Activated B cell treated with CpG ODN at 0.5 μM for 24 hours (primary cell): ENCODE measurements at regions of chr16 and their contacts with region 1.

Region 1: DNA sequence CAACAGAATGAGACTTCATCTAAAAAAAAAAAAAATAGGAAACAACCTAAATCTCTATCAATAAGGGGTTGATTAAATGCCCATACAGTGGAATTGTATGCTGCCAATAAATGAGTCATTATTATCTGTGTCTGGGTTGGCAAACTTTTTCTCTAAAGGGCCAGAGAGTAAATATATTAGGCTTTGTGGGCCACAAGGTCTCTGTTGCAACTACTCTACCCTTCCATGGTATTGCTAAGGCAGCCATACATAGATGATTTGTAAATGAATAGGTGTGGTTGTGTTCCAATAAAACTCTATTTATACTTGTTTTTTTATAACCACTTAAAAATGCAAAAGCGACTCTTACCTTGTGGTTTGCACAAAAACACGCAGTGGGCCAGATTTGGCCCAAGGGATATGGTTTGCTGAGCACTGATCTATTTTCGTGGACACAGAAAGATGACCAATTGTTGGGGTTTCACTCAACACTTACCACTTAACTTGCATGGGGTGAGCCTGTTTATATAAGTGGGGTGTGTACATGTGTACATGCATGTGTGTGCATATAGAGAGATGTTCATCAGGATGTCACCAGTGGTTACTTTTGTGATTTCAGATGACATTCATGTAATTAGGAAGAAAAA is 12.4 kb upstream of the IL4R start:
- DNase-seq: no peak
- ATAC-seq: no peak
- H3K4me3 Mint-ChIP-seq: no peak overlapping the region
- H3K27ac Mint-ChIP-seq: peak overlapping the region; percentile 42
- H3K4me1 Mint-ChIP-seq: peaks cover 88% of the 10 kb centered on the region
- H3K27me3 Mint-ChIP-seq: no peaks in the 10 kb centered on the region
- CTCF ChIP-seq: no peak

Region 2: GRCh38 chr16:26963114-26963513 is 338.2 kb before region 1 on chr16:
- CTCF ChIA-PET with region 1: no interaction called
- POLR2A ChIA-PET with region 1: no interaction called
- intact Hi-C with region 1: no loop called
- DNase-seq: no peak
- ATAC-seq: no peak
- H3K4me3 Mint-ChIP-seq: no peak overlapping the region
- H3K27ac Mint-ChIP-seq: no peak overlapping the region
- H3K4me1 Mint-ChIP-seq: no peaks in the 10 kb centered on the region
- H3K27me3 Mint-ChIP-seq: peaks cover 5% of the 10 kb centered on the region
- CTCF ChIP-seq: no peak

Region 3: DNA sequence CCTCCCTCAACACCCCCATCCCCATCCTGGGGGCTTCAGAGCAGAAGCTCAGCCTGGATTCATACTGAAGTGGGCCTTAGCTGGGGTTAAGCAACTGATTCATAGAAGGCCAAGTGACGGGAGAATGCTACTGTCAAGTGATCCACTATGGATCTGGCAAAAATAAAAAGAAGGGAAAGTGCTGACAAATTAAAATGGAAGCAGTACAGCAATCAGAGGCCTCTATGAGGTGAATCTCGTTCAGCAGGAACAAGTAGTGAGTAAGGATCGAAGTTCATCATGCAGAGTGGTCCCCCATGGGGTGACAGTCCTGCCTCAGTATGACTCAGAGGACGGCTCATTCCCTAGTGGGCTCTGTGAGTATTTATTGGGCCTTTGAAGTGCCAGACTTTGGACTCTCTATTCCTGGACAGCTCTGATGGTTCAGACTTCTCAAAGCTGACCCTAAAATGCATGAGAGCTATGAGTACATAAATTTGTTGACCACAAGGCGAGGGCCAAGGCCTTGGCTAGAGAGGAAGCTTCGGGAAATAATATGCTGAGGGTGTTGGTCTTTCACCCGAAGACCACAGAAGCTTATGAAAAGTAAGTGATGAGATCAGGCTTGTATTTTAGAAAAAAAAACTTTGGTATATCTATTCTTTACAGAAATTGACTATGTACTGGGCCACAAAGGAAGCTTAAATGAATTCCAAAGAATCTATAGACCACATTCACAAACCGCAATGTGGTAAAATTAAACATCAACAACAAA is 27.5 kb before region 1 on chr16:
- CTCF ChIA-PET with region 1: interaction called, 5 read pairs
- POLR2A ChIA-PET with region 1: interaction called, 10 read pairs
- intact Hi-C with region 1: no loop called
- DNase-seq: no peak
- ATAC-seq: peak; percentile 86
- H3K4me3 Mint-ChIP-seq: peak overlapping the region; percentile 25
- H3K27ac Mint-ChIP-seq: peak overlapping the region; percentile 93
- H3K4me1 Mint-ChIP-seq: peaks cover 62% of the 10 kb centered on the region
- H3K27me3 Mint-ChIP-seq: no peaks in the 10 kb centered on the region
- CTCF ChIP-seq: no peak

Region 4: DNA sequence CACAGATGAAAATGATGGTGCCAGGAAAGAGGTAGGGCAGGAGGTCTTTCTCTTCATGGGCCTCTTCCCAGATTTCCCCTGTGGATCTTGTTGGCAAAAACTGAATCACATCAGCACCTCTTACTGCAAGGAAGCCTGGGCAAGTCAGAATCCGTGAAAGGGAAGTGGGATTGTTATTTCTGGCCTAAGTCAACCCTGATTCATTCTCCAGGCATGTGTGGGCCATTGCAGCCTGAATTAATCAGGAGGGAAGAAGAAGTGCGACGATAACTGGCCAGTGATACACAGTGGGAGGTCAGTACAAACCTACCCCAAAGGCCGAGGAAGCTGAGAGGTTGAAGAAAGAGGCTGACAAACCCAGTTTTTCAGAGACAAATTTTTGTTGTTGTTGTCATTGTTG is 14.9 kb before region 1 on chr16:
- CTCF ChIA-PET with region 1: no interaction called
- POLR2A ChIA-PET with region 1: interaction called, 13 read pairs
- intact Hi-C with region 1: loop called (anchors 2 kb)
- DNase-seq: no peak
- ATAC-seq: no peak
- H3K4me3 Mint-ChIP-seq: no peak overlapping the region
- H3K27ac Mint-ChIP-seq: no peak overlapping the region
- H3K4me1 Mint-ChIP-seq: peaks cover 57% of the 10 kb centered on the region
- H3K27me3 Mint-ChIP-seq: no peaks in the 10 kb centered on the region
- CTCF ChIP-seq: no peak

Region 5: GRCh38 chr16:28098959-28099945 is 797.9 kb after region 1 on chr16:
- CTCF ChIA-PET with region 1: no interaction called
- POLR2A ChIA-PET with region 1: no interaction called
- intact Hi-C with region 1: no loop called
- DNase-seq: no peak
- ATAC-seq: no peak
- H3K4me3 Mint-ChIP-seq: no peak overlapping the region
- H3K27ac Mint-ChIP-seq: no peak overlapping the region
- H3K4me1 Mint-ChIP-seq: no peaks in the 10 kb centered on the region
- H3K27me3 Mint-ChIP-seq: no peaks in the 10 kb centered on the region
- CTCF ChIP-seq: no peak